ENCODE measurements at regions of chr18 and their contacts with region 1.

Region 1: DNA sequence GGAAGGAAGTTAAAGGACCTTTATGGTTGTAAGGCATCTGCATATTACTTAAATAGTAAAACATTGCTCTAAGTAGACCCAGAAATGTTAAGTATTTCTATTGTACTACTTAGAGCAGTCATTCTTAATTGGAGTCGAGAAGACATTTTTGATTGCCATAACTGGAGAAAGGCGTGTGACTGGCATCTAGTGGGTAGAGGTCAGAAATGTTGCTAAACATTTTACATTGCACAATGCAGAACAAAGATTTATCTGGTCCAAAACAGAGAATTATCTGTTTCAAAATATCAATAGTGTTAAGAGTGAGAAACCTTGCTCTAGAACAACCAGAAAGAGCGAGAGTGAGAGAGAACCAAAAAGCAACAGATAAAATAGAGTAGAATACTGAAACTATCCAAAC is 23.3 kb upstream of the ROCK1 start:
- DNase-seq: peak in 6 of 9 experiments; percentile 19 to 64 (median 42)
- ATAC-seq: peak; percentile 65
- H3K4me3 ChIP-seq: no peak overlapping the region
- H3K4me3 Mint-ChIP-seq: no peak overlapping the region
- H3K27ac ChIP-seq: no peak overlapping the region
- H3K27ac Mint-ChIP-seq: no peak overlapping the region
- H3K4me1 ChIP-seq: no peaks in the 10 kb centered on the region
- H3K4me1 Mint-ChIP-seq: no peaks in the 10 kb centered on the region
- H3K27me3 ChIP-seq: no peaks in the 10 kb centered on the region
- H3K27me3 Mint-ChIP-seq: no peaks in the 10 kb centered on the region
- CTCF ChIP-seq: peak; percentile 75

Region 2: DNA sequence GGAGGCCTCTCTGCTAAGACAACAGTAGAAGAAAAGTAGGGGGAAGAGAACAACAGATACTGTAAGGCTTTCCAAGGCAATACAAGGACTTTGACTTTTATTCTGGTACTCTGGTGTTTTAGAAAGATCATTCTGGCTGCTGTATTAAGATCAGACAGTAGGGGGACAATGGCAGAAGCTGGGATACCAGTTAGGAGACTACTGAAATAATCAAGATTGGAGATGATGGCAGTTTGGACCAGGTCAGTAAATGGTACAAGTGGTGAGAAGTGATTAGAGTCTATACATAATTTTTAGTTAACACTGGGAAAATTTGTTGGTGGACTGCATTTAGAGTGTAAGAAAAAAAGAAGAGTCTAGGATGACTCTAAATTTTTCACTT is 163.0 kb before region 1 on chr18:
- CTCF ChIA-PET with region 1: interaction called, 3 read pairs
- POLR2A ChIA-PET with region 1: no interaction called
- intact Hi-C with region 1: loop called (anchors 1 kb)
- DNase-seq: peak in 2 of 9 experiments; percentile 22 to 39
- ATAC-seq: peak; percentile 63
- H3K4me3 ChIP-seq: no peak overlapping the region
- H3K4me3 Mint-ChIP-seq: no peak overlapping the region
- H3K27ac ChIP-seq: no peak overlapping the region
- H3K27ac Mint-ChIP-seq: no peak overlapping the region
- H3K4me1 ChIP-seq: no peaks in the 10 kb centered on the region
- H3K4me1 Mint-ChIP-seq: peaks cover 3% of the 10 kb centered on the region
- H3K27me3 ChIP-seq: no peaks in the 10 kb centered on the region
- H3K27me3 Mint-ChIP-seq: no peaks in the 10 kb centered on the region
- CTCF ChIP-seq: peak; percentile 64

Region 3: GRCh38 chr18:21004726-21005125 is 130.2 kb before region 1 on chr18:
- CTCF ChIA-PET with region 1: no interaction called
- POLR2A ChIA-PET with region 1: no interaction called
- intact Hi-C with region 1: loop called (anchors 5 kb)
- DNase-seq: no peak
- ATAC-seq: no peak
- H3K4me3 ChIP-seq: no peak overlapping the region
- H3K4me3 Mint-ChIP-seq: no peak overlapping the region
- H3K27ac ChIP-seq: no peak overlapping the region
- H3K27ac Mint-ChIP-seq: peak overlapping the region; percentile 37
- H3K4me1 ChIP-seq: no peaks in the 10 kb centered on the region
- H3K4me1 Mint-ChIP-seq: peaks cover 13% of the 10 kb centered on the region
- H3K27me3 ChIP-seq: no peaks in the 10 kb centered on the region
- H3K27me3 Mint-ChIP-seq: no peaks in the 10 kb centered on the region
- CTCF ChIP-seq: no peak

Region 4: GRCh38 chr18:21031845-21032244 is 103.1 kb before region 1 on chr18:
- CTCF ChIA-PET with region 1: no interaction called
- POLR2A ChIA-PET with region 1: no interaction called
- intact Hi-C with region 1: loop called in 1 of 2 experiments (anchors 5 kb)
- DNase-seq: no peak
- ATAC-seq: no peak
- H3K4me3 ChIP-seq: no peak overlapping the region
- H3K4me3 Mint-ChIP-seq: no peak overlapping the region
- H3K27ac ChIP-seq: no peak overlapping the region
- H3K27ac Mint-ChIP-seq: no peak overlapping the region
- H3K4me1 ChIP-seq: no peaks in the 10 kb centered on the region
- H3K4me1 Mint-ChIP-seq: peaks cover 21% of the 10 kb centered on the region
- H3K27me3 ChIP-seq: no peaks in the 10 kb centered on the region
- H3K27me3 Mint-ChIP-seq: no peaks in the 10 kb centered on the region
- CTCF ChIP-seq: no peak

Region 5: DNA sequence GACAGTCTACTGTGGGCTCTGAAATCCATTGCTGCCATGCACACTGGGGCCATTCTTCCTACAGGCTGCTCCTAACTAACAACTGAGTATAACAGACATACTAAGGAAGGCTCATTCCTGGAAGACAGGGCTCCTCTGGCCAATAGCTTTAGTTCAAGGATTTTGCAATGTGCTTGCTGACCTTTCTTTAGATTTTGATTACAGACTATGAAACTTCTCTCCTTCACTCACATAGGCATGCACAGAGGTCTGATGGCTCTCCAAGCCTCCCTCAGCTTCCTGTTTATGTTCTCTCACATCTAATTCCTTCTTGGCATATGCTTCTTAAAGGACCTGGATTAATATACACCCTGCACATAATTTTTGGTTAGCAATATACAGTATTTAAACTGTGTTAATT is 11.1 kb after region 1 on chr18:
- CTCF ChIA-PET with region 1: no interaction called
- POLR2A ChIA-PET with region 1: no interaction called
- intact Hi-C with region 1: no loop called
- DNase-seq: no peak
- ATAC-seq: no peak
- H3K4me3 ChIP-seq: no peak overlapping the region
- H3K4me3 Mint-ChIP-seq: no peak overlapping the region
- H3K27ac ChIP-seq: no peak overlapping the region
- H3K27ac Mint-ChIP-seq: no peak overlapping the region
- H3K4me1 ChIP-seq: no peaks in the 10 kb centered on the region
- H3K4me1 Mint-ChIP-seq: no peaks in the 10 kb centered on the region
- H3K27me3 ChIP-seq: no peaks in the 10 kb centered on the region
- H3K27me3 Mint-ChIP-seq: peaks cover 8% of the 10 kb centered on the region
- CTCF ChIP-seq: no peak

Measured in CD8-positive, alpha-beta T cell (primary cell).